HepG2 (cell line): ENCODE measurements at regions of chr2 and their contacts with region 1.

Region 1: DNA sequence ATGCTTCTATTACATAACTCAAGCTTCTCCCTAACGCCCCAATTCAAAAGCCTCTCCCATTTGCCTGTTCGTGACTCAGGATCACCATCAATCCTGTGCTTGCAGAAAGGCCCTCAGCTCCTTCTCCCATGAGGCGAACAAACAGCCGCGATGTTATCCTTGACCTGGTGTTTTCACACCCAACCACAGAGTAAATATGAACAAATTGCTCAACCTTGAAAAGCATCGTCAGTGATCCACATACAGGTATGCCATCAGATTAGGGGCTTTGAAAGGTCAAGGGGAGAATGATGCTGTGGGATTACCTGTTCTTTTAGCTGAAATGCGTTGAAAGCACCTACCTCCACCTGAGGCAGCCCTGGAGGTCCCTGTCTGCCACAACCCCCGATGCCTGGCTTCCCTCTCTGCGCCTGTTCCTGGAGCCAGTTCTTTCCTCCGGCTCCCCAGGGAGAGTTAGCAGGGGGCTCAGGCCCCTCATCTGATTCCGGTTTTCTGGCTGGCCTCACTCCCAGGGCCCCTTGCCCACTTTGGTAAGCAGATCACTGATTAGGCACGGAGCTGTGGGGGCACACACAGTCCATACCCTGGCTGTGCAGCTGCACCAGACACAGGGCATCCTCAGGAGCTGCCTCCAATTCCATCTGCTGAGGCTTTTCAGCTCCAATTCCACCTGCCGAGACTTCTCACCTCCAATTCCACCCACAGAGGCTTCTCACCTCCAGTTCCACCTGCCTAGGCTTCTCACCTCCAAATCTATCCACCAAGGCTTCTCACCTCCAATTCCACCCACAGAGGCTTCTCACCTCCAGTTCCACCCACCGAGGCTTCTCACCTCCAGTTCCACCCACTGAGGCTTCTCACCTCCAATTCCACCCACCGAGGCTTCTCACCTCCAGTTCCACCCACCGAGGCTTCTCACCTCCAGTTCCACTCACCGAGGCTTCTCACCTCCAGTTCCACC is 39.3 kb upstream of the ODC1 start:
- DNase-seq: peak; percentile 89
- ATAC-seq: peak; percentile 78
- H3K4me3 ChIP-seq: no peak overlapping the region
- H3K27ac ChIP-seq: no peak overlapping the region
- H3K4me1 ChIP-seq: peaks cover 44% of the 10 kb centered on the region
- H3K27me3 ChIP-seq: peaks cover 4 to 46% of the 10 kb centered on the region in 2 experiments; a peak in 4 of 5 replicates
- CTCF ChIP-seq: no peak; the same call in 1 of the 2 replicates
- EP300 ChIP-seq: peak; percentile 33 to 89; a peak in 2 of 4 replicates
- POLR2A ChIP-seq: no peak
- RAD21 ChIP-seq: no peak

Region 2: DNA sequence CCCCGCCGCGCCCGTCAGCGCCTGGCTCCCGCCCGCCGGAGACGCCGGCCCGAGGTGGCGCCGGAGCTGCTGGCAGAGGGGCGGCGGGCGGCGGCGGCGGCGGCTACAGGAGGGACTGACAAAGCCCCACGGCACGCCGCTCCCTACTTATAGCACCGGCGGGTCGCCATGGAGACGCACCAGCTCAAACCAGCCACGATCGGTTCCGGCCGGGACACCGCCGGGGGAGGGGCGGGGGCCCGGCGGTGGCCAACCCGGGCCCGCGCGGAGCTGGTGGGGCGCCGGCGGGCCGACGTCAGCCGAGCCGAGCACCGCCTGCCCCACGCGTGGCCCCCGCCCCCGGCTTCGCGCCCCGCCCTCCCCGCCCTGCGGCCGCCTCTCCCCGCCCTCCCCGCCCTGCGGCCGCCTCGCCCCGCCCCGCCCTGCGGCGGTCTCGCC is 39.2 kb before region 1 on chr2 and contains the start of gene ODC1:
- CTCF ChIA-PET with region 1: no interaction called
- POLR2A ChIA-PET with region 1: interaction called, 13 read pairs
- in situ Hi-C with region 1: no loop called
- intact Hi-C with region 1: loop called (anchors 5 kb)
- DNase-seq: peak; percentile 88
- ATAC-seq: peak; percentile 62
- H3K4me3 ChIP-seq: peak within 1 kb of the TSS; percentile 58 to 75 (median 70)
- H3K27ac ChIP-seq: peak within 1 kb of the TSS; percentile 90
- H3K4me1 ChIP-seq: peaks cover 67% of the 10 kb centered on the region
- H3K27me3 ChIP-seq: no peaks in the 10 kb centered on the region
- CTCF ChIP-seq: no peak
- EP300 ChIP-seq: no peak
- POLR2A ChIP-seq: no peak; a peak in 1 of 4 replicates
- RAD21 ChIP-seq: peak; percentile 49; the same call in 1 of the 2 replicates
- total RNA-seq, gene ODC1: 371 and 422 TPM in 2 replicates